GM12878 (cell line): ENCODE measurements at regions of chr3 and their contacts with region 1.

Region 1: DNA sequence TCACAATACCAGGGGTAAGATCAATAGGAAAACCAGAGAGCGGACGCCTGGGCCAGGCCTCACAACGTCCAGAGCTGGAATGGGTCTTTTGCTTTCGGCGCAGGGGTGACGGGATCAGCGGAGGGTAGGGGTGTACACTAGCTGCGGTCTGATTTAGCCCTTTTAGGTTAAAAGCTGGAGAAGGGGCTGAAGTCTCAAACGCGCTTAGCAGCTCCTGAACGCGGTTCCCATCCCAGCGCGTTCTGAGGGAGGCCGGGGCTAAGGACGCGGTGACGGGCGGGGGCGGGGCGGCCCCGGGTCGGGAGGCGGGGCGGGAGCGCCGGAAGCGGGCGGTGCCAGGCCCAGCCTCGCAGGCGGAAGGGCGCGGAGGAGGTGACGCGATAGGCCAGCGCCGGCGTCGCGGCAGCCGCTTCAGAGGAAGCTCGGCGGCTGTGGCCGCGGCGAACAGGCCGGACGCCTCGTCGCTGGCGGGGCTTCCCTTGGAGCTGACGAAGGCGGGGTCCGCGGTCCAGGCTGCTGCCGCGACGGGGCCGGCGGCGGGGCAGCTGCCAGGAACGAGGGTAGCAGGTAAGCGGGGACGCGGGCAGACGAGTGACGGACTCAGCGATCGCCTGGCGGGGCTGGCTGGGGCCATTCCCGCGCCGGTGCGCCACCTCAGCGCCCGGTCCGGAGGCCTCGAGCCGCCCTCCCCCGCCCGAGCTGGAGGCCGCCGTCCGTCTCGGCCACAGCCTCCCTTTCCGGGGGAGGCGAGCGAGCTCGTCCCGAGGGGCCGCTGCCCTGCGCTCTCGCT is at the start of gene SENP5:
- DNase-seq: peak; percentile 43
- ATAC-seq: peak; percentile 95
- H3K4me3 ChIP-seq: peak within 1 kb of the TSS; percentile 73
- H3K27ac ChIP-seq: peak within 1 kb of the TSS; percentile 82
- H3K4me1 ChIP-seq: peaks cover 4% of the 10 kb centered on the region; the same call in 1 of the 2 replicates
- H3K27me3 ChIP-seq: no peaks in the 10 kb centered on the region
- CTCF ChIP-seq: no peak
- EP300 ChIP-seq: no peak
- POLR2A ChIP-seq: peak; percentile 100
- RAD21 ChIP-seq: no peak
- polyA plus RNA-seq, gene SENP5: 6.4 to 9.6 TPM

Region 2: DNA sequence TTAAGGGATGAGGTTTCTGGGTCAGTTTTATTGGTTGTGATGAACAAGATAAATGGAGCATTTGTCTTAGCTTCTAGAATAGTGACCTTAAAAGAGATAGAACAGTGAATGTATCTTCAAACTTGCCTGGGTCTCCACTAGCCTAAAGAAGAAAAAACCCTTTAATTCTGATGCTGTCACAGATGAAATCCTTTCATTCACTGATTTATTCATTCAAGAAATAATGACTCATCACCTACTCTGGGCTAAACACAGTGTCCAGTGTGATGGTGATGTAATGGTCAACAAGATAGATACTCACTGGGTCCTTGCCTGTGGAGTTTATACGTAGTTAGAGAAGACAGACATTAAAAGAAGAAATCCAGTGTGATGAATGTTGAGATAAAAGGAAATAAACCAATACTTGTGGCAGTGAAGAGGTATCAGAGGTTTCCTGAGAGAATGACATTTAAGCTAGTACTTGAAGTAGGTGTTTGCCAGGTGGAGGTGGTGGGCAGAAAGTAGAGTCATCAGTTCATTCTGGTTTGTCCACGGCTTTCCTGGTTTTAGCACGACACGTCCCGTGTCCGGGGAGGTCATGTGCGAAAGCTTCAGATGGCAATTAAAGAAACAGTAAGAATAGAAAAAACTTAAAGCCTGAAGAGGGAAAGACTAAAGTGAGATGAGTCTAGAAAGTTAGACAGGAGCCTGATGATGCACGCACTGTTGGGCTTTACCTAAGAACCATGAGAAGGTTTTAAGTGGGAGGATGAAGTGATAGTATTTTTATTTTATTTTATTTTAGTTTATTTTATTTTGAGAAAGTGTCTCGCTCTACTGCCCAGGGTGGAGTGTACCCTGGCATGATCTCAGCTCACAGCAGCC is 109.6 kb before region 1 on chr3:
- CTCF ChIA-PET with region 1: no interaction called
- POLR2A ChIA-PET with region 1: no interaction called
- RAD21 ChIA-PET with region 1: no interaction called
- SMC1A ChIA-PET with region 1: no interaction called
- in situ Hi-C with region 1: no loop called
- intact Hi-C with region 1: no loop called
- DNase-seq: no peak
- ATAC-seq: peak; percentile 63
- H3K4me3 ChIP-seq: no peak overlapping the region
- H3K27ac ChIP-seq: no peak overlapping the region
- H3K4me1 ChIP-seq: no peaks in the 10 kb centered on the region
- H3K27me3 ChIP-seq: no peaks in the 10 kb centered on the region
- CTCF ChIP-seq: no peak
- EP300 ChIP-seq: no peak
- POLR2A ChIP-seq: no peak
- RAD21 ChIP-seq: no peak

Region 3: DNA sequence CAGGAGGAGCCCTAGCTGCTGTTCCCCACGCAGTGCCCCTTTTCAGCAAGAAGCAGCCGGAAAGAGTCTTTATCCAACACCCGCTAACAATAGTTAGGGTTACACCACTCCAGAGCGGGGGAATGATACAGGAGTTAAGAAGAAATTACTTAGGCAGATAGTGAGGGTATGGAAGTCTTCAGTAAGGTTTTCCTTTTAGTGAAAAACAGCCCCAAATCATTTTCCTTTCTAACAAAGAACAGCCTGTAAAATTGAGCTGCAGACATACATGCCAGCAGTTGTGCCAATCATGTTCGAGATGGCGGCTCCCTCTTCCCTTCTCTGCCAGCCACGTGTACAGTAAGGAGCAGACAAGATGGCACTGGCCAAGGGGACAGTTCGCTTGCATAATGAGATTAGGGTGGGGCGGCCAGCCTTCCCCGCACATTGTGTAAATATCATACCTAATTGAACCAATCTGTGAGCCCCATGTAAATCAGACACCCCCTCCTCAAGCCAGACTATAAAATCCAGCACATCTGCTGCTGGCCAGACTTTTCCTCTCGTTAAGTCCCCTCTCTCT is 18.4 kb before region 1 on chr3:
- CTCF ChIA-PET with region 1: no interaction called
- POLR2A ChIA-PET with region 1: no interaction called
- RAD21 ChIA-PET with region 1: no interaction called
- SMC1A ChIA-PET with region 1: no interaction called
- in situ Hi-C with region 1: no loop called
- intact Hi-C with region 1: no loop called
- DNase-seq: no peak
- ATAC-seq: no peak
- H3K4me3 ChIP-seq: no peak overlapping the region
- H3K27ac ChIP-seq: no peak overlapping the region
- H3K4me1 ChIP-seq: no peaks in the 10 kb centered on the region
- H3K27me3 ChIP-seq: no peaks in the 10 kb centered on the region
- CTCF ChIP-seq: no peak
- EP300 ChIP-seq: no peak
- POLR2A ChIP-seq: no peak
- RAD21 ChIP-seq: no peak

Region 4: GRCh38 chr3:196932600-196932999 is 64.9 kb after region 1 on chr3:
- CTCF ChIA-PET with region 1: no interaction called
- POLR2A ChIA-PET with region 1: interaction called, 11 read pairs
- RAD21 ChIA-PET with region 1: interaction called, 3 read pairs
- SMC1A ChIA-PET with region 1: no interaction called
- in situ Hi-C with region 1: no loop called
- intact Hi-C with region 1: no loop called
- DNase-seq: no peak
- ATAC-seq: peak; percentile 84
- H3K4me3 ChIP-seq: no peak overlapping the region
- H3K27ac ChIP-seq: peak overlapping the region; percentile 65; the same call in 1 of the 2 replicates
- H3K4me1 ChIP-seq: peaks cover 17% of the 10 kb centered on the region; the same call in 1 of the 2 replicates
- H3K27me3 ChIP-seq: no peaks in the 10 kb centered on the region
- CTCF ChIP-seq: no peak
- EP300 ChIP-seq: no peak
- POLR2A ChIP-seq: 0 out of 2 replicates have a peak, but pooled peaks have one; percentile 26
- RAD21 ChIP-seq: no peak

Region 5: DNA sequence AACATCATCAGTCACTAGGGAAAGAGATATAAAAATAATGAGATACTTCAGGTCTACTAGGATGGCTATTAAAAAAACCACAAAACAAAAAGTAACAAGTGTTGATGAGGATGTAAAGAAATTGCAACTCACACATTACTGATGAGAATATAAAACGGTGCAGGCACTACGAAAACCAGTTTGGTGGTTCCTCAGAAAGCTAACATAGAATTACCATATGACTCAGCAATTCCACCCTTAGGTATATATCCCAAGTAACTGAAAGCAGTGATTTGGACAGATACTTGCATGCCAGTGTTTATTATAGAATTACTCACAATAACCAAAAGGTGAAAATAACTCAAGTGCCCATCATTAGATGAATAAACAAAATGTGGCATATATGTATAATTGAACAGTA is 249.4 kb after region 1 on chr3:
- CTCF ChIA-PET with region 1: no interaction called
- POLR2A ChIA-PET with region 1: no interaction called
- RAD21 ChIA-PET with region 1: no interaction called
- SMC1A ChIA-PET with region 1: no interaction called
- in situ Hi-C with region 1: no loop called
- intact Hi-C with region 1: no loop called
- DNase-seq: peak; percentile 5
- ATAC-seq: peak; percentile 46
- H3K4me3 ChIP-seq: no peak overlapping the region
- H3K27ac ChIP-seq: no peak overlapping the region
- H3K4me1 ChIP-seq: peaks cover 2% of the 10 kb centered on the region; the same call in 1 of the 2 replicates
- H3K27me3 ChIP-seq: no peaks in the 10 kb centered on the region
- CTCF ChIP-seq: no peak
- EP300 ChIP-seq: no peak
- POLR2A ChIP-seq: no peak
- RAD21 ChIP-seq: no peak

Region 6: GRCh38 chr3:197168606-197169005 is 300.9 kb after region 1 on chr3:
- CTCF ChIA-PET with region 1: no interaction called
- POLR2A ChIA-PET with region 1: no interaction called
- RAD21 ChIA-PET with region 1: no interaction called
- SMC1A ChIA-PET with region 1: no interaction called
- in situ Hi-C with region 1: no loop called
- intact Hi-C with region 1: no loop called
- DNase-seq: no peak
- ATAC-seq: no peak
- H3K4me3 ChIP-seq: no peak overlapping the region
- H3K27ac ChIP-seq: no peak overlapping the region
- H3K4me1 ChIP-seq: no peaks in the 10 kb centered on the region
- H3K27me3 ChIP-seq: no peaks in the 10 kb centered on the region
- CTCF ChIP-seq: no peak
- EP300 ChIP-seq: no peak
- POLR2A ChIP-seq: no peak
- RAD21 ChIP-seq: no peak